Panc1 (cell line): ENCODE measurements at regions of chr1 and their contacts with region 1.

Region 1: DNA sequence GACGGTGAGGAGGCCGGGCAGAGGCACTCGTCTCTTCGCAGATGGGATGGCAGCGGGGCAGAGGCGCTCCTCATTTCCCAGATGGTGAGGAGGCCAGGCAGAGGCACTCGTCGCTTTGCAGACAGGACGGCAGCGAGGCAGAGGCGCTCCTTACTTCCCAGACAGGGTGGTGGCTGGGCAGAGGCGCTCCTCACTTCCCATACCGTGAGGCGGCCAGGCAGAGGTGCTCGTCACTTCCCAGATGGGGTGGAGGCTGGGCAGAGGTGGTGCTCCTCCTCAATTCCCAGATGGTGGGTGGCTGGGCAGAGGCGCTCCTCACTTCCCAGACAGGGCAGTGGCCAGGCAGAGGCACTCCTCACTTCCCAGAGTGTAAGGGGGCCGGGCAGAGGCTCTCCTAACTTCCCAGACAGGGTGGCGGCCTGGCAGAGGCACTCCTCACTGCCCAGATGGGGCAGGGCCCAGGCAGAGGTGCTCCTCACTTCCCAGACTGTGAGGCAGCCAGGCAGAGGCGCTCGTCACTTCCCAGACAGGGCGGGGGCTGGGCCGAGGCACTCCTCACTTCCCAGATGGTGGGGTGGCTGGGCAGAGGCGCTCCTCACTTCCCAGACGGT is 9.9 kb downstream of the TCHHL1 start:
- DNase-seq: no peak
- ATAC-seq: no peak
- H3K4me3 ChIP-seq: no peak overlapping the region
- H3K27ac ChIP-seq: no peak overlapping the region
- H3K4me1 ChIP-seq: no peaks in the 10 kb centered on the region
- H3K27me3 ChIP-seq: peaks cover 6% of the 10 kb centered on the region; the same call in 1 of the 2 replicates
- CTCF ChIP-seq: no peak

Region 2: GRCh38 chr1:151909150-151910149 is 169.5 kb before region 1 on chr1 and contains the start of gene THEM4:
- CTCF ChIA-PET with region 1: interaction called, 11 read pairs
- POLR2A ChIA-PET with region 1: no interaction called
- in situ Hi-C with region 1: no loop called
- intact Hi-C with region 1: no loop called
- DNase-seq: peak; percentile 78
- ATAC-seq: peak; percentile 99
- H3K4me3 ChIP-seq: peak within 1 kb of the TSS; percentile 71 to 91
- H3K27ac ChIP-seq: peak within 1 kb of the TSS; percentile 98
- H3K4me1 ChIP-seq: peaks cover 9% of the 10 kb centered on the region
- H3K27me3 ChIP-seq: no peaks in the 10 kb centered on the region
- CTCF ChIP-seq: peak; percentile 53
- total RNA-seq, gene THEM4: 21.8 TPM

Region 3: DNA sequence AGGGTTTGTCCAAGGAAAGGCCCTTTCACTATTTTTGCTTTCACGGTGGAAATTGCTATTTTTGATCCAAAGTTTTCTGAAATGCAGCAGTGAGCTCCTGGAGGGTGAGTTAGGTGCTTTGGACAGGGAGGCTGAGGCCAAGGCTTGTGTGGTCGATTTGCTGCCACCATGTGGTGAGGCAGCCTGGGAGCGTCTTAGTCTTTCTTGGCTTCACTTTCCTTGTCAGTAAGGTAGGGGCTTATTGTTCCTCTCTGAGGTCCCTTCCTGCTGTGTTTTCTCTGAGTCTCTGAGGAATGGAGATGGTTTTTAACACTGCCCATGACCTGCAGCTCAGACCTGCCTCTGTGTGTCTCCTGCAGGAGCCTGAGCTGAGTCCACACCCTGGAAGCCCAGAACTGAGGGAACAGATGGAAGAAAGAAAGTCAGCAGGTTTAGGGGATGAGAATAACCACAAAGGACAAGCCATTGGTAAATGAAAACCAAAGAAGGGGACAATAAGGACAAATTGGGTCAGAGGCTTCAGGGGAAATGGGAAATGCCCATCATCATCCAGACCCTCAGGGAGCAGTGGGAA is 65.2 kb before region 1 on chr1:
- CTCF ChIA-PET with region 1: no interaction called
- POLR2A ChIA-PET with region 1: no interaction called
- in situ Hi-C with region 1: no loop called
- intact Hi-C with region 1: no loop called
- DNase-seq: no peak
- ATAC-seq: peak; percentile 80
- H3K4me3 ChIP-seq: no peak overlapping the region
- H3K27ac ChIP-seq: no peak overlapping the region
- H3K4me1 ChIP-seq: no peaks in the 10 kb centered on the region
- H3K27me3 ChIP-seq: no peaks in the 10 kb centered on the region
- CTCF ChIP-seq: peak; percentile 86

Region 4: GRCh38 chr1:152110860-152111514 is 32.1 kb after region 1 on chr1:
- CTCF ChIA-PET with region 1: no interaction called
- POLR2A ChIA-PET with region 1: interaction called, 13 read pairs
- in situ Hi-C with region 1: no loop called
- intact Hi-C with region 1: no loop called
- DNase-seq: no peak
- ATAC-seq: peak; percentile 83
- H3K4me3 ChIP-seq: peak overlapping the region; percentile 53 to 78
- H3K27ac ChIP-seq: peak overlapping the region; percentile 66
- H3K4me1 ChIP-seq: peaks cover 5% of the 10 kb centered on the region; the same call in 1 of the 2 replicates
- H3K27me3 ChIP-seq: peaks cover 43% of the 10 kb centered on the region
- CTCF ChIP-seq: no peak